ENCODE measurements at regions of chr1 and their contacts with region 1.

Region 1: GRCh38 chr1:147172168-147172992 is at the start of gene PRKAB2:
- DNase-seq: peak; percentile 97
- ATAC-seq: peak; percentile 93
- H3K4me3 ChIP-seq: peak within 1 kb of the TSS; percentile 76
- H3K27ac ChIP-seq: peak within 1 kb of the TSS; percentile 88
- H3K4me1 ChIP-seq: peaks cover 6% of the 10 kb centered on the region
- H3K27me3 ChIP-seq: no peaks in the 10 kb centered on the region
- CTCF ChIP-seq: peak; percentile 92
- POLR2A ChIP-seq: peak; percentile 66
- RAD21 ChIP-seq: peak; percentile 62
- total RNA-seq, gene PRKAB2: 8.4 and 10.6 TPM in 2 replicates

Region 2: DNA sequence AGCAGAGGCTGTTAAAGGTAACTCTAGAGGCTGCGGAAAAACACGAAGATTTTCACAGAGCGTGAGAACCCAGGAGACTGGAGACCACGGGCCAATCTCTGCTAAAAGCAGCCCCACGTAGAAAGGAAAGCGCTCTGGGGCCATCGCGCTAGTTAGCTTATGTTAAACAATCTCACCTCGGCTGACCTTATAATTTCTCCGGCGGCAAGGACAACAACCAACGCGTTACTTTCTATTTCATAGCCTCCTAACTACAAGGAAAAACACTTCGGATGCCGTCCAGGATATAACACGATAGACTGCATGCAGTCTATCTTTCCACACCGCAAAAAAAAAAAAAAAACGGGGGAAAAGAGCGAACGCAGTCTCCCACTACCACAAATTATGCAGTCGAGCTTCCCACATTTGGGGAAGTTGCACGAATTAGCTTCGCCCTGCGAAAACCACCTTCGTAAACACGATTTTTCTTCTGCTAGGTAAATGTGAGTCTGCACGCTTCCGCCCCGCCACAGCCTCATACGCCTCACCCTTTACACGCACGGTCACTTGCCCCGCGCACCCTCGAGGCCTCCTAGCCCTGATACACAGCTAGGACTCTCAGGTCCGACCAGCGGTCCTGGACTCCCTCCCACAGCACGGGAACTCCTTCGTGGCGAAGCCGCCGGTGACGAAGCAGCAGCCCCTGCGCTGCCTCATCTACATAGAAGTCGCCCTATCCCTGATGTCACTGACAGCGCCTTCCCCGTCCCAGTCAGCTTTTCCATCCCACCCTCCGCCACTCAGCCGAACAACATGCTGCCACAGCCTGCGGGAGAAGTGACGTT is 87.9 kb before region 1 on chr1:
- CTCF ChIA-PET with region 1: no interaction called
- POLR2A ChIA-PET with region 1: no interaction called
- dilution Hi-C with region 1: no loop called
- in situ Hi-C with region 1: no loop called
- intact Hi-C with region 1: loop called (anchors 1 kb)
- DNase-seq: peak; percentile 85
- ATAC-seq: peak; percentile 90
- H3K4me3 ChIP-seq: peak overlapping the region; percentile 61
- H3K27ac ChIP-seq: peak overlapping the region; percentile 84; the same call in 1 of the 2 replicates
- H3K4me1 ChIP-seq: no peaks in the 10 kb centered on the region
- H3K27me3 ChIP-seq: peaks cover 33% of the 10 kb centered on the region
- CTCF ChIP-seq: no peak
- POLR2A ChIP-seq: peak; percentile 99
- RAD21 ChIP-seq: no peak

Region 3: GRCh38 chr1:147201276-147201675 is 28.9 kb after region 1 on chr1:
- CTCF ChIA-PET with region 1: no interaction called
- POLR2A ChIA-PET with region 1: no interaction called
- dilution Hi-C with region 1: no loop called
- in situ Hi-C with region 1: no loop called
- intact Hi-C with region 1: loop called (anchors 2 kb)
- DNase-seq: peak; percentile 18
- ATAC-seq: no peak
- H3K4me3 ChIP-seq: no peak overlapping the region
- H3K27ac ChIP-seq: no peak overlapping the region
- H3K4me1 ChIP-seq: no peaks in the 10 kb centered on the region
- H3K27me3 ChIP-seq: no peaks in the 10 kb centered on the region
- CTCF ChIP-seq: no peak
- POLR2A ChIP-seq: no peak
- RAD21 ChIP-seq: no peak

Region 4: DNA sequence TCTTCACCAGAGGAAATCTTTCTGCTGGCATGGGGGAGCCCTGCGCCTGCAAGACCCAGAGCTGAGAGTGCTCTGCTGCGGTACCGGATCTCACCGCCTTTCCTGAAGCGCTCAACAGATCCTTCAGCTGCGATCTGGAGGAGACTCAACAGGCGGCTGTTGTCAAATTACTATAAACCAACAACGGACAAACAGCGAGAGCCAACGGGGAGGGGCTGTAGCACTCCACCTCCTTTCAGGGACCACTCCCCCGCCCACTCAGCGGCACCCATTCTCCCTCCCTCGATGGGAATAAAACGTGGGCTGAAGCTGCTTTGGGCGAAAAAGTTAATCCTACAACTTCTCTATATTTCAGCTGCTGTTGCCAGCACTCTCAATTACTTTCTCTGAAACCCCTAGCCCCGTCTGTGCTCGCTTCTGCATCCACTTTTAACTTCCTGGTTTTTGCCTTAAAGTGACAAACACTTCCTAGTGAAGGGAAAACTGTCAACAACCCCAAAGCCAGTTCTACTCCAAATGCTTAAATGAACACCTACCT is 52.9 kb after region 1 on chr1 and contains the start of gene FMO5:
- CTCF ChIA-PET with region 1: no interaction called
- POLR2A ChIA-PET with region 1: no interaction called
- dilution Hi-C with region 1: no loop called
- in situ Hi-C with region 1: no loop called
- intact Hi-C with region 1: loop called (anchors 5 kb)
- DNase-seq: peak; percentile 57
- ATAC-seq: peak; percentile 95
- H3K4me3 ChIP-seq: peak within 1 kb of the TSS; percentile 92
- H3K27ac ChIP-seq: peak within 1 kb of the TSS; percentile 75; the same call in 1 of the 2 replicates
- H3K4me1 ChIP-seq: peaks cover 2% of the 10 kb centered on the region; the same call in 1 of the 2 replicates
- H3K27me3 ChIP-seq: no peaks in the 10 kb centered on the region; the same call in 1 of the 2 replicates
- CTCF ChIP-seq: 0 out of 2 replicates have a peak, but pooled peaks have one; percentile 6
- POLR2A ChIP-seq: no peak
- RAD21 ChIP-seq: no peak; the same call in 1 of the 2 replicates
- total RNA-seq, gene FMO5: 0.36 and 0.83 TPM in 2 replicates

Region 5: DNA sequence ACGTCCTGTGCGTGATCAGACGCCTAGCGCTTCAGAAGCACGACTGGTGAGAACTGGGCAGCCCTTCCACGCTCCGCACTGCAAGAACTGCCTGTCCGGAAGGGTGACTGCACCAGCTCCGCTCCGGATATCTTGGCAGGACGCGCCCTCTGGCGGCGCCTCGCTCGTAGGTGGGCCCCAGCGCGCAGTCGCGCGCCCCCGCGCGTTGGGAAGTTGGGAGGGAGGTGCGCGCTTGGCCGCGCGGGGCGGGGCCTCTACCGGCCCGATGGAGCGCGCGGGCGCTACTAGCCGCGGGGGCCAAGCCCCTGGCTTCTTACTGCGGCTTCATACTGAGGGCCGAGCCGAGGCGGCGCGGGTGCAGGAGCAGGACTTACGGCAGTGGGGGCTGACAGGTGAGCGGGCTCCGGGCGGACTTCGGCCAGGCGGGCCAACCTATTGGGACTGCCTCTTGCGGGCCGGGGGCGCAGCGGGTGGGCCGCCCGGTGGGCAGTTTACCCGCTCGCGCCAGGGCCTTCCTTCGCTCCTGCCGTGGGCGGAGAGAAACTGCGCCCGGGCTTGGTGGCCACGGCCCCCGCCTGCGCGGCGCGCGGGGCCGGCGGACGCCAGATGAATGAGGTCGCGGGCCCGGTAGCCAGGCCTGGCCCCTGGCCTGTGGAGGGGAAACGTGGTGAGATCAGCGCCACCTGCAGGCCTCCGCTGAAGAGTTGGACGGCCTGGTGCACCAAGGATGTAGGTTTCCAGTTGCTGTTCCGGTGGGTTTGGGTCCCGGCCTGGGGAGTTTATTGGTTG is 70.3 kb after region 1 on chr1 and contains the start of gene CHD1L:
- CTCF ChIA-PET with region 1: interaction called, 4 read pairs
- POLR2A ChIA-PET with region 1: no interaction called
- dilution Hi-C with region 1: no loop called
- in situ Hi-C with region 1: loop called (anchors 5 kb)
- intact Hi-C with region 1: loop called (anchors 1 kb)
- DNase-seq: peak; percentile 95
- ATAC-seq: peak; percentile 94
- H3K4me3 ChIP-seq: peak within 1 kb of the TSS; percentile 70
- H3K27ac ChIP-seq: peak within 1 kb of the TSS; percentile 70
- H3K4me1 ChIP-seq: peaks cover 7% of the 10 kb centered on the region
- H3K27me3 ChIP-seq: no peaks in the 10 kb centered on the region
- CTCF ChIP-seq: peak; percentile 98
- POLR2A ChIP-seq: peak; percentile 76
- RAD21 ChIP-seq: peak; percentile 93
- total RNA-seq, gene CHD1L: 47.5 and 51.7 TPM in 2 replicates

Region 6: DNA sequence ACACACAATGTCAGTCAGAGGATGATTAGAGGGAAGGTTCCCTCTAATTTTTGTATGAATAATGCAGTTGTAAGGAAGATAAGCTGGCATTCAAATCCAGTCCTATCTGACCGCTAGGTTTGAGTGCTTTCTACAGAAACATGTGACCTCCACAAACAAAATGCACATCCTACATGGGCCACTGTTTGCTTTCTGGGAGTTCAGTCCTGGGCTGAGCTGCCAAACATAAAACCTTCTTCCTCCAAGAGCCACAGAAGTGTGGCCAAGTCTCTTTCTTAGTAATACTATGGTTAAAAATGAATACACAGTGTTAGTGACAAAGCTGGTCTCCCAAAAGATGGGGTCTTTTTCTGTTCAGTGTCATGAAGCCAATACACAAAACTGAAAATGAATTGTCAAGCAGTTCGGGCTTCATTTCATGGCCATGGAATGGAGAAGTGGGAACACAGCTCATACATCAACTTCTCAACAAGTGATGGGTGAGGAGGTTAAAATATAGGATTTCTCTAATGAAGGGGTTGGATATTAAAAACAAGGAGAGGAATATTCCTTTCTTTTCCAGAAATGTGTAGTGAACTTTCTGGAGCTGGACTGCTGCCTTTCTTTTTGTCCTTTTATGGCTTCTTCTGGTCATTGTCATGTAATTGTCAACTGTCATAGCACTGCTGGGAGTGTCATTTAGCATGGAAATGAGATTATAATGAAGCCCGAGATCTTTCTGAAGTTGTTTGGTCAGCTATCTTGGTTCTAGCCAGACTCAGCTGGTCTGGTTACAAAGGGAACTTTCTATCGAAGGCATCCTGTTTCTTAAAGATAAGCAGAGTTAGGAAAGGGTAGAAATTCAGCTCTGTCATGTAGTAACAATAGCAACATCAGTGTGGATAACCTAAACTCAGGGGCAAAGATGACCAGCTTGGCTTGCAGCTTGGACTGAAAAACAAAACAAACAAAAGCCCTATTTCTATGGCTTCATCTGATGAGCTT is 205.2 kb after region 1 on chr1:
- CTCF ChIA-PET with region 1: no interaction called
- POLR2A ChIA-PET with region 1: no interaction called
- dilution Hi-C with region 1: no loop called
- in situ Hi-C with region 1: no loop called
- intact Hi-C with region 1: no loop called
- DNase-seq: no peak
- ATAC-seq: no peak
- H3K4me3 ChIP-seq: no peak overlapping the region
- H3K27ac ChIP-seq: no peak overlapping the region
- H3K4me1 ChIP-seq: no peaks in the 10 kb centered on the region
- H3K27me3 ChIP-seq: no peaks in the 10 kb centered on the region
- CTCF ChIP-seq: no peak
- POLR2A ChIP-seq: no peak
- RAD21 ChIP-seq: no peak

Region 7: DNA sequence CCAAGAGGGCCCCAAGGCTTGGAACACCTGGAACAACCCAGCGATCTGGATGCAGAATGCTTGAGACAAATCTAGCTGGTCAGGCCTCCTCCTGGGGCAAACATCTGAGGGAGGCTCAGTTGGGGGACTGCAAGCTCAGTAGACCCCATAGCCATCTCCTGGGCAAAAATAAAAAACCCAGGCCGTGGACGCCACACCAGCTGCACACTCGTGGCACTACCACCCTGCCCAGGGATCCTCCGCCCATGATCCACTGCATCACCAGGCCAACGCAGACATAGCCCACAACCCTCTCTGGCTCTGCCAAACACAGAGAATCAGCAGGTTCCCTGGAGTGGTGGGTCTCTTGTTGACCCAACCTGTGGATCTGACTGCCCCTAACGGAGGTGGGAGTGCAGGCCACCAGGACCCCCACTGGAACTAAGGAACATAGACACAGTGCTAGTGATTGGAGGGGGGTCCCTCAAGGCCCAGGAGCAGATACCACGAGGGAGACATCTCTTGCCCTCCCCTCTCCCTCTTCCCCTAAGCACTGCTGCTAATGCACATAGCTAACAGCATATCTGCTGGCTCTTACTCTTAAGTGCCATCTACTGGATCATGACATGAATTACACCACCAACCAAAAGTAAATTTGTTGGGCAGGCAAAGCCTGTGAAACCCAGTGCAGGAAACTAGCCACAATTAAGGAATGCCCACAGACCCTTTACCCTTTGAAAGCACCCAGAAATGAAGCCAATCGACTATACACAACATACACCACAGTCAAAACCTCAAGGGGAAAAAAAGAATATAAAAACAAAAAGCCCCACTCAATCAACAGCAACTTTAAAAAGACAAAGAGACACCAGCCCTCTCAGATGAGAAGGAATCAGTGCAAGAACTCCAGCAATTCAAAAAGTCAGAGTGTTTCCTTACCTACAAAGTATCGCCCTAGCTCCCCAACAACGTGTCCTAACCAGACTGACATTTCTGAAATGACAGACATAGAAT is 217.4 kb after region 1 on chr1:
- CTCF ChIA-PET with region 1: interaction called, 3 read pairs
- POLR2A ChIA-PET with region 1: no interaction called
- dilution Hi-C with region 1: no loop called
- in situ Hi-C with region 1: no loop called
- intact Hi-C with region 1: loop called (anchors 5 kb)
- DNase-seq: peak; percentile 58
- ATAC-seq: peak; percentile 100
- H3K4me3 ChIP-seq: no peak overlapping the region
- H3K27ac ChIP-seq: no peak overlapping the region
- H3K4me1 ChIP-seq: no peaks in the 10 kb centered on the region
- H3K27me3 ChIP-seq: peaks cover 1% of the 10 kb centered on the region; the same call in 1 of the 2 replicates
- CTCF ChIP-seq: peak; percentile 74
- POLR2A ChIP-seq: no peak
- RAD21 ChIP-seq: peak; percentile 82

Measured in IMR-90 (cell line).